ENCODE measurements at regions of chr5 and their contacts with region 1.

Region 1: GRCh38 chr5:107571621-107572536 is 98.9 kb downstream of the EFNA5 start:
- DNase-seq: peak; percentile 72 to 96
- ATAC-seq: peak; percentile 90 to 92
- H3K4me3 ChIP-seq: peak overlapping the region; percentile 39
- H3K27ac ChIP-seq: peak overlapping the region; percentile 78 to 89
- H3K4me1 ChIP-seq: peaks cover 82% of the 10 kb centered on the region
- CTCF ChIP-seq: peak; percentile 84
- EP300 ChIP-seq: no peak
- POLR2A ChIP-seq: no peak
- RAD21 ChIP-seq: peak; percentile 82 to 90

Region 2: DNA sequence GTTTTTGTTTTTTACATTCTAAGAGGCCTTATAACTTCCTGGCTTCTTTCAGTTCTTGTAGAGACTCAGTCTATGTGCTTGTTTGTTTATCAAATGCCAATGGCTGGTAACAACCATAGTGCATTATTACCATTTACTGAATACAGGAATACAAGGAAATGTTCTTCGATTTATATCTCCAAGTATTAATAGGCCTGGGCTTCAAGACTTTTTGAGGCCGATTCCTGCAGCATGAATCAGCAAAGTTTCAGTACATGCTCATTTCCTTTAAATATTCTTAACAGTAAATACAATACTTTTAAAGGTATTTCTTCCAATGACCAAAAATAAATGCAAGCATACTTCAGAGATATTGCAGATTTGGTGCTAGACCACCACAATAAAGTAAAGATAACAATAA is 436.5 kb before region 1 on chr5:
- CTCF ChIA-PET with region 1: no interaction called
- POLR2A ChIA-PET with region 1: no interaction called
- DNase-seq: peak in 1 of 2 experiments; percentile 4
- ATAC-seq: no peak
- H3K4me3 ChIP-seq: no peak overlapping the region
- H3K27ac ChIP-seq: no peak overlapping the region
- H3K4me1 ChIP-seq: no peaks in the 10 kb centered on the region
- CTCF ChIP-seq: no peak
- EP300 ChIP-seq: no peak
- POLR2A ChIP-seq: no peak
- RAD21 ChIP-seq: no peak

Region 3: GRCh38 chr5:107313921-107314320 is 258.0 kb before region 1 on chr5:
- CTCF ChIA-PET with region 1: no interaction called
- POLR2A ChIA-PET with region 1: no interaction called
- DNase-seq: no peak
- ATAC-seq: no peak
- H3K4me3 ChIP-seq: no peak overlapping the region
- H3K27ac ChIP-seq: no peak overlapping the region
- H3K4me1 ChIP-seq: no peaks in the 10 kb centered on the region
- CTCF ChIP-seq: no peak
- EP300 ChIP-seq: no peak
- POLR2A ChIP-seq: no peak
- RAD21 ChIP-seq: no peak

Region 4: GRCh38 chr5:107337281-107337680 is 234.6 kb before region 1 on chr5:
- CTCF ChIA-PET with region 1: no interaction called
- POLR2A ChIA-PET with region 1: no interaction called
- DNase-seq: peak in 1 of 2 experiments; percentile 50
- ATAC-seq: no peak; a peak in 2 of 6 replicates
- H3K4me3 ChIP-seq: no peak overlapping the region
- H3K27ac ChIP-seq: no peak overlapping the region
- H3K4me1 ChIP-seq: peaks cover 8% of the 10 kb centered on the region; the same call in 2 of the 3 replicates
- CTCF ChIP-seq: no peak
- EP300 ChIP-seq: no peak
- POLR2A ChIP-seq: no peak
- RAD21 ChIP-seq: no peak

Region 5: DNA sequence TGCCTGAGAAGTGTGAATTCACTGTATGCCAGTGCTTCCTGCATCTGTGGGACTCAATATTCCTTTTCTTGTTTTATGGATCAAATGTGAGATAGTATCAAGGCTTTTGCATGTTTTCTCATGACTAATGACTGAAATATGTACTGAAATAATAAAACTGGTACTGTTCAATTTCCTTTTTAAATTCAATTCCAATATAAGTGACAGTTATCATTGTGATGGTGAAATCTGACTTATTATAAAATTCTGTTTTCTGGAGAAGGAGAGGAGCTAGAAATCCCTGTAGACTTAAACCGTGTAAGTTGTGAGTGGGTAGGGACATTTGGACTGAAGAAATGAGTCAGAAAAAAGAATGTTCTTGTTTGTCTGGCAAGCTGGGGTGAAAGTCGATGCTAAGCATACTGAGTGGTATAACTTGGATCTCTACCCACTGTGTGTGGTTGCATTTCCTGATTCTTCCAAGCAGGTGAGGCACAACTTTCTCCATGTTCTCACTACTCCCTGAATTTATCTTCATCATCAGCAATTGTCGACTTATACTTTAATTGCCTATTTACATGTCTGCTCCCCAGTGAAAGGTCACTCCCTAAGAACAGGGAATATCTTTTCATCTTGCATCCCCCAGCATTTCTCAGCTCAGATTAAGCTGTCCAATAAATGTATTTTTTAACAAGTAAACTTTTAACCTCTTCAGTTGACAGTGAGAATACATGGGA is 146.2 kb before region 1 on chr5:
- CTCF ChIA-PET with region 1: interaction called, 14 read pairs
- POLR2A ChIA-PET with region 1: interaction called, 4 read pairs
- DNase-seq: peak; percentile 35 to 78
- ATAC-seq: peak; percentile 88 to 91
- H3K4me3 ChIP-seq: no peak overlapping the region
- H3K27ac ChIP-seq: peak overlapping the region; percentile 83 to 85
- H3K4me1 ChIP-seq: peaks cover 71% of the 10 kb centered on the region
- CTCF ChIP-seq: no peak
- EP300 ChIP-seq: peak in 1 of 2 experiments; percentile 13; a peak in 1 of 5 replicates
- POLR2A ChIP-seq: no peak
- RAD21 ChIP-seq: no peak

Region 6: DNA sequence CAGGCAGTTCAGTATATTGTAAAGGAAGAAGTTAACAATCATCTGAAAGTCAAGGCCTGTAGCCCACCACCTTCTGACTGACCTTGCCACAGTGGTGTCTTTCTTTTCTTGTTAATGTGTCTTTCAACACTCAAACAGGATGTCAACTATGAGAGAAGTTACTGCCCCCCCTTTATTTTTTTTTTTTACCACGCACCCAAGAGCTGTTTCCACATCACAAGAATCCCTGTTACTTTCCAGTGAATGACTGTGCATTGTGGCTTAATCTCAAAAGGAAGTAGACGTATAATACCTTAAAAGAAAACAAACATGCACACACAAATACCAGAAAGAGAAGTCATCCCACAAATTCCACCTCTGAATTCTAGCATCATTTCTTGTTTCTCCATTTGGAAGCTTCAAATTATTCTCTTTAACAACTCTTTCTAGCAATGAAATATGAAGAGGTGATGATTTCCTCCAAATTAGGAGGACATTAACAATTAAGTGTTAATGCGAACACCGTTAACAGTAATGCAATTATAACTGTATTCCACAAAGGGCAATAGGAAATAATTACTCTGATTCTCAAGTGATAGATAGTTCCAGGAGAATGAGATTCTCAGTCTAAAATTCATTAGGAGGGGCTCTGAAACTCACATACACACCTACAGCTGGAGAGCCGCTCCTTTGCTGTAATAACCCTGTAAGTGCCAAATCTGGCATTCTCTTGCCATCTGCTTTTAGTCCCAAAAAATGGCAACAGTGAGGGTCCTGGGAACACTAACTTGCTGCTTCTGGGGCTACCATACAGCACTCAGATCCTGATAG is 102.2 kb before region 1 on chr5:
- CTCF ChIA-PET with region 1: interaction called, 14 read pairs
- POLR2A ChIA-PET with region 1: interaction called, 13 read pairs
- DNase-seq: peak; percentile 53 to 95
- ATAC-seq: peak; percentile 68
- H3K4me3 ChIP-seq: 0 out of 3 replicates have a peak overlapping the region, but pooled peaks have one; percentile 2
- H3K27ac ChIP-seq: peak overlapping the region; percentile 94
- H3K4me1 ChIP-seq: peaks cover 94% of the 10 kb centered on the region
- CTCF ChIP-seq: no peak
- EP300 ChIP-seq: peak; percentile 93; a peak in 4 of 5 replicates
- POLR2A ChIP-seq: no peak
- RAD21 ChIP-seq: peak; percentile 25 to 64; a peak in 4 of 5 replicates

Region 7: GRCh38 chr5:107557051-107557658 is 14.7 kb before region 1 on chr5:
- CTCF ChIA-PET with region 1: interaction called, 36 read pairs
- POLR2A ChIA-PET with region 1: no interaction called
- DNase-seq: peak; percentile 59 to 73
- ATAC-seq: peak; percentile 80 to 82
- H3K4me3 ChIP-seq: no peak overlapping the region
- H3K27ac ChIP-seq: peak overlapping the region; percentile 6 to 70; a peak in 5 of 6 replicates
- H3K4me1 ChIP-seq: peaks cover 74% of the 10 kb centered on the region
- CTCF ChIP-seq: no peak
- EP300 ChIP-seq: no peak
- POLR2A ChIP-seq: no peak
- RAD21 ChIP-seq: peak in 1 of 2 experiments; percentile 16; a peak in 2 of 5 replicates

Region 8: GRCh38 chr5:107672211-107673038 is 100.5 kb after region 1 on chr5:
- CTCF ChIA-PET with region 1: interaction called, 10 read pairs
- POLR2A ChIA-PET with region 1: interaction called, 14 read pairs
- DNase-seq: peak; percentile 93 to 99
- ATAC-seq: peak; percentile 55 to 83
- H3K4me3 ChIP-seq: peak overlapping the region; percentile 69
- H3K27ac ChIP-seq: peak overlapping the region; percentile 90 to 99
- H3K4me1 ChIP-seq: peaks cover 18% of the 10 kb centered on the region
- CTCF ChIP-seq: no peak
- EP300 ChIP-seq: no peak
- POLR2A ChIP-seq: peak; percentile 58
- RAD21 ChIP-seq: no peak; a peak in 2 of 5 replicates

Measured in A549 (cell line).